ENCODE measurements at regions of chr11 and their contacts with region 1.

Region 1: DNA sequence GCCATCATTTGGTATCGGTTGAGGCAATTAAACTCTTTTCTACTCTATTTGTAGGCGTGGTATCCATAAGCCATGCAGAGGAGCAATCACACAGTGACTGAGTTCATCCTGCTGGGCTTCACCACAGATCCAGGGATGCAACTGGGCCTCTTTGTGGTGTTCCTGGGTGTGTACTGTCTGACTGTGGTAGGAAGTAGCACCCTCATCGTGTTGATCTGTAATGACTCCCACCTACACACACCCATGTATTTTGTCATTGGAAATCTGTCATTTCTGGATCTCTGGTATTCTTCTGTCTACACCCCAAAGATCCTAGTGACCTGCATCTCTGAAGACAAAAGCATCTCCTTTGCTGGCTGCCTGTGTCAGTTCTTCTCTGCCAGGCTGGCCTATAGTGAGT is 8.4 kb downstream of the OR9G4 start:
- DNase-seq: no peak
- H3K4me3 ChIP-seq: no peak overlapping the region
- H3K27ac ChIP-seq: no peak overlapping the region
- H3K4me1 ChIP-seq: no peaks in the 10 kb centered on the region
- H3K27me3 ChIP-seq: no peaks in the 10 kb centered on the region
- CTCF ChIP-seq: no peak

Region 2: DNA sequence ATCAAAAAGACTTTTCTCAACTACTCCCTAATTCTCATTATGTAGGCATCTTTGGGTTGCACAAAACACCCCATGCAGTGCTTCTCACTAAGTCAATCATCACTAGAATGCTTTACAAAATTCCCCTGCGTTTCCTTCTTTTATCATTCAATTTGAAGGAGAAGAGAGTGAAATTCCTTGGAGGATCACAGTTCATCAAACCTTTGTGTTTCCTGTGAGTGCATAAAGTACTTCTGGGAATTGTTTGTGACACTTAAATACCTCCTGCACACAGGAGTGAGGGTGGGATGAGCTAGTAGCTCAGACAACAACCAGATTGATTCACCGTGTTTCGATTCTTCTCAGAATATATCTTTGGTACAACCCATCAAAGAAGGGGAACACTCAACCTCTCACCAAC is 80.4 kb before region 1 on chr11:
- CTCF ChIA-PET with region 1: no interaction called
- POLR2A ChIA-PET with region 1: no interaction called
- intact Hi-C with region 1: loop called (anchors 10 kb)
- DNase-seq: no peak
- H3K4me3 ChIP-seq: no peak overlapping the region
- H3K27ac ChIP-seq: no peak overlapping the region
- H3K4me1 ChIP-seq: no peaks in the 10 kb centered on the region
- H3K27me3 ChIP-seq: no peaks in the 10 kb centered on the region
- CTCF ChIP-seq: no peak

Region 3: DNA sequence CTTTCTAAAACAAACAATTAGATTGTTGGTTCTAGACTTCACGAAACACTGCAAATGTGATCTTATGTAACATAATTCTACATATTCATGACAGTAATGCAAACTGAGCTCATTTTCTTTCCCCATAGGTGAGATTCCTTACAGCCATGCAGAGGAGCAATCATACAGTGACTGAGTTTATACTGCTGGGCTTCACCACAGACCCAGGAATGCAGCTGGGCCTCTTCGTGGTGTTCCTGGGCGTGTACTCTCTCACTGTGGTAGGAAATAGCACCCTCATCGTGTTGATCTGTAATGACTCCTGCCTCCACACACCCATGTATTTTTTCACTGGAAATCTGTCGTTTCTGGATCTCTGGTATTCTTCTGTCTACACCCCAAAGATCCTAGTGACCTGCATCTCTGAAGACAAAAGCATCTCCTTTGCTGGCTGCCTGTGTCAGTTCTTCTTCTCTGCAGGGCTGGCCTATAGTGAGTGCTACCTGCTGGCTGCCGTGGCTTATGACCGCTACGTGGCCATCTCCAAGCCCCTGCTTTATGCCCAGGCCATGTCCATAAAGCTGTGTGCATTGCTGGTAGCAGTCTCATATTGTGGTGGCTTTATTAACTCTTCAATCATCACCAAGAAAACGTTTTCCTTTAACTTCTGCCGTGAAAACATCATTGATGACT is 39.7 kb before region 1 on chr11:
- CTCF ChIA-PET with region 1: no interaction called
- POLR2A ChIA-PET with region 1: no interaction called
- intact Hi-C with region 1: loop called (anchors 5 kb)
- DNase-seq: peak; percentile 11
- H3K4me3 ChIP-seq: no peak overlapping the region
- H3K27ac ChIP-seq: no peak overlapping the region
- H3K4me1 ChIP-seq: no peaks in the 10 kb centered on the region
- H3K27me3 ChIP-seq: no peaks in the 10 kb centered on the region
- CTCF ChIP-seq: no peak

Region 4: GRCh38 chr11:56750190-56750589 is 10.1 kb after region 1 on chr11:
- CTCF ChIA-PET with region 1: no interaction called
- POLR2A ChIA-PET with region 1: no interaction called
- intact Hi-C with region 1: no loop called
- DNase-seq: peak; percentile 14
- H3K4me3 ChIP-seq: no peak overlapping the region
- H3K27ac ChIP-seq: no peak overlapping the region
- H3K4me1 ChIP-seq: no peaks in the 10 kb centered on the region
- H3K27me3 ChIP-seq: no peaks in the 10 kb centered on the region
- CTCF ChIP-seq: no peak; the same call in 1 of the 2 replicates

Region 5: DNA sequence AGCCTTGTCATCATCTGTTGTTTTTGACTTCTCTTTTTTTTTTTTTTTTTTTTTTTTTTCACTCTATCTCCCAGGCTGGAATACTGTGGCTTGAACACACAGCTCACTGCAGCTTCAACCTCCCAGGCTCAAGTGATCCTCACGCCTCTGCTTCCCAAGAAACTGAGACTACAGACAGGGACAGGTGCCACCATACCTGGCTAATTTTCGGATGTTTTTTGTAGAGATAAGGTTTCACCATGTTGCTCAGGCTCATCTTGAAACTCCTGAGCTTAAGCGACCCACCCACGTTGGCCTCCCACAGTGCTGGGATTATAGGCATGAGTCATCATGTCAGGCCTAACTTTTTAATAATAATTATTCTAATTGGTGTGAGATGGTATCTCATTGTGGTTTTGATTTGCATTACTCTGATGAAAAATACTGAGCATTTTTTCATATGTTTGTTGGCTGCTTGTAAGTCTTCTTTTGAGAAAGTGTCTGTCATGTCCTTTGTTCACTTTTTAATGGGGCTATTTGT is 59.6 kb after region 1 on chr11:
- CTCF ChIA-PET with region 1: no interaction called
- POLR2A ChIA-PET with region 1: no interaction called
- intact Hi-C with region 1: loop called (anchors 5 kb)
- DNase-seq: peak; percentile 43
- H3K4me3 ChIP-seq: no peak overlapping the region
- H3K27ac ChIP-seq: no peak overlapping the region
- H3K4me1 ChIP-seq: no peaks in the 10 kb centered on the region
- H3K27me3 ChIP-seq: no peaks in the 10 kb centered on the region
- CTCF ChIP-seq: no peak

Region 6: GRCh38 chr11:56885177-56885576 is 145.1 kb after region 1 on chr11:
- CTCF ChIA-PET with region 1: no interaction called
- POLR2A ChIA-PET with region 1: no interaction called
- intact Hi-C with region 1: no loop called
- DNase-seq: no peak
- H3K4me3 ChIP-seq: no peak overlapping the region
- H3K27ac ChIP-seq: no peak overlapping the region
- H3K4me1 ChIP-seq: no peaks in the 10 kb centered on the region
- H3K27me3 ChIP-seq: peaks cover 3% of the 10 kb centered on the region
- CTCF ChIP-seq: no peak